GM13977 (cell line): ENCODE measurements at regions of chr1 and their contacts with region 1.

Region 1: GRCh38 chr1:98931128-98931835 is 73.4 kb downstream of the PLPPR5 start:
- DNase-seq: no peak
- CTCF ChIP-seq: no peak

Region 2: GRCh38 chr1:98824736-98825135 is 106.5 kb before region 1 on chr1:
- in situ Hi-C with region 1: no loop called
- DNase-seq: no peak
- CTCF ChIP-seq: no peak

Region 3: DNA sequence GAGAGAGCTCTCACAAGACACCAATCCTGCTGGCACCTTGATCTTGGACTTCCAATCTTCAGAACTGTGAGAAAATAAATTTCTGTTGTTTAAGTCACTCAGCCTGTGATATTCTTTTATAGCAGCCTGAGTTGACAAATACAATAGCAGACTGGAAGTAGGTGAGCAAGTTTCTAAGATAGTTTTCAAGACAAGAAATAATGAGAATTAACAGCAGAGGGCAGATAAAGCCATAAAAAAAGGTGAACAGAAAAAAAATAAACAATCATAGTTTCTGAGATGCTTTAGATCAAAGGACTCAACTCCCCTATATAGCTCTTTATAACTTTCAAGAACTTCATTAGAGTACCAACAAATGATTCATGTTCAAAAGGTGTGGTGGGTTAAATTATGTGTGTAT is 46.4 kb before region 1 on chr1:
- in situ Hi-C with region 1: loop called (anchors 5 kb)
- DNase-seq: no peak
- CTCF ChIP-seq: no peak